IMR-90 (cell line): ENCODE measurements at regions of chr20 and their contacts with region 1.

Region 1: GRCh38 chr20:44370639-44371220 is 15.2 kb downstream of the HNF4A start:
- DNase-seq: no peak
- ATAC-seq: no peak; the same call in 1 of the 2 replicates
- H3K4me3 ChIP-seq: no peak overlapping the region
- H3K27ac ChIP-seq: no peak overlapping the region
- H3K4me1 ChIP-seq: no peaks in the 10 kb centered on the region
- H3K27me3 ChIP-seq: peaks cover 6% of the 10 kb centered on the region
- CTCF ChIP-seq: no peak
- POLR2A ChIP-seq: no peak
- RAD21 ChIP-seq: no peak

Region 2: GRCh38 chr20:45174434-45175364 is 804.0 kb after region 1 on chr20 and contains the start of gene PI3:
- CTCF ChIA-PET with region 1: no interaction called
- POLR2A ChIA-PET with region 1: no interaction called
- dilution Hi-C with region 1: no loop called
- in situ Hi-C with region 1: no loop called
- intact Hi-C with region 1: loop called (anchors 5 kb)
- DNase-seq: no peak
- ATAC-seq: no peak
- H3K4me3 ChIP-seq: no peak within 1 kb of the TSS
- H3K27ac ChIP-seq: no peak within 1 kb of the TSS
- H3K4me1 ChIP-seq: no peaks in the 10 kb centered on the region
- H3K27me3 ChIP-seq: peaks cover 4% of the 10 kb centered on the region
- CTCF ChIP-seq: no peak
- POLR2A ChIP-seq: no peak
- RAD21 ChIP-seq: no peak
- total RNA-seq, gene PI3: not detected in 2 replicates